ENCODE measurements at regions of chr1 and their contacts with region 1.

Region 1: DNA sequence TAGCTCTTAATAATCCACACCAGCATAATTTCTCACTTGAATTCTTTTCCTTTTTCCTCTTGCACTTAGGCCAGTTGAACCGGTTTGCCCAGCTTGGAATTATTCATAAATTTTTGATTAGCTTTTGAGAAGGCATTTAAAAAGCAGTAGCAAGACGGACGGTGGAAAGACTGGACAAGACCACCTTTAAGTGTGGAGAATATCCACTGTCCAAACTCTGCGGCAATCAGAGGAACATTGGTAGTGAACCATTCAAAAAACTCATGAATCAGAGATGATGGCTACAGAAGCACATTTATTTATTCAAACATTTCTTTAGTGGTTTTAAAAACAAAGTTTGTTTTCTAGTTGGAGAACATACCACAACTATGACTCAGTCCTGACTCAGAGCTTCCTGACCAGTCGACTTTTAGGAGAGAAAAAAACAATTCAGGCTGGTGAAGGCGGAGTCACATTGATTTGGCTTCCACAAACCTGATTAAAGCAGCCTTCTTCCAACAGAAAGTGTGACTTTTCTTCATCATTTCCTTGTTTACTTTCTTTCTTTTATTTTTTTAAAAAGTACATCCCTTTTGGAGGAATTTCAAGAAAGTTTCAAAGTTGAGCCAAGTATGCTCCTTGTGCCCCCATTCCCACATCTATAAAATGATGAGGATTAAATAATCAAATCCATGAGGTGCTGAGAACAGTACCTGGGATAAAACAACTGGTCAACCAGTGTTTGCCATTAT is 128.8 kb downstream of the ADSS2 start:
- DNase-seq: peak; percentile 99
- H3K4me3 Mint-ChIP-seq: peak overlapping the region; percentile 51
- H3K27ac Mint-ChIP-seq: peak overlapping the region; percentile 97
- H3K4me1 Mint-ChIP-seq: peaks cover 50% of the 10 kb centered on the region
- H3K27me3 Mint-ChIP-seq: no peaks in the 10 kb centered on the region
- CTCF ChIP-seq: no peak

Region 2: GRCh38 chr1:244341455-244342450 is 18.8 kb after region 1 on chr1:
- CTCF ChIA-PET with region 1: interaction called, 6 read pairs
- POLR2A ChIA-PET with region 1: interaction called, 10 read pairs
- intact Hi-C with region 1: no loop called
- DNase-seq: peak; percentile 94
- H3K4me3 Mint-ChIP-seq: peak overlapping the region; percentile 12
- H3K27ac Mint-ChIP-seq: peak overlapping the region; percentile 76
- H3K4me1 Mint-ChIP-seq: peaks cover 9% of the 10 kb centered on the region
- H3K27me3 Mint-ChIP-seq: no peaks in the 10 kb centered on the region
- CTCF ChIP-seq: no peak

Region 3: DNA sequence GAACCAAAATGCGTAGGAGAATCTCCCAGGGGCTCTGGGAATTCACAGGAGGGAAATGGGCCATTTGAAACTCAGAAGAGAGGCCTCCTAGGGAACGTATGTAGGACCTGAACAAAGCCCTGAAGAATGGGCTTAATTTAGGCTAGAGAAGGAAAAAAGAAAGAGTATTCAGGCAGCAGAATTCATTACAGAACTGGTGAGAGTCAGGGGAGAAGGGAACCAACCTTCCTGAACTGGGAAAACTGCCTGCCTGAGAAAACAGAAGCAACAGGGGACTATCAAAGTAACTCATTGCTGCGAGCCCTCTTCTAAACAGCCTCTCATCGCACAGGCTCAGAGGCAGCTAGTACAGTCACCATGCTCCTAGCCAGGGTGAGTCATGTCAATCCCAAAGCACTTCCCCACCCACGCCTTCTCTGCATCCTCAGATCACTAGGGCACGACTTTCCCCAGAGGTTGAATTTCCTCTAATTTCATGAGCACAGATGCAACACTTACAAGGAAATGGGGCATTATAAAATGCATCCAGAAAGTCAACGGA is 30.7 kb after region 1 on chr1:
- CTCF ChIA-PET with region 1: interaction called, 4 read pairs
- POLR2A ChIA-PET with region 1: interaction called, 22 read pairs
- intact Hi-C with region 1: no loop called
- DNase-seq: peak; percentile 99
- H3K4me3 Mint-ChIP-seq: no peak overlapping the region
- H3K27ac Mint-ChIP-seq: peak overlapping the region; percentile 97
- H3K4me1 Mint-ChIP-seq: peaks cover 43% of the 10 kb centered on the region
- H3K27me3 Mint-ChIP-seq: no peaks in the 10 kb centered on the region
- CTCF ChIP-seq: no peak

Region 4: GRCh38 chr1:244371242-244372141 is 48.5 kb after region 1 on chr1:
- CTCF ChIA-PET with region 1: interaction called, 3 read pairs
- POLR2A ChIA-PET with region 1: interaction called, 67 read pairs
- intact Hi-C with region 1: no loop called
- DNase-seq: peak; percentile 77
- H3K4me3 Mint-ChIP-seq: no peak overlapping the region
- H3K27ac Mint-ChIP-seq: peak overlapping the region; percentile 9
- H3K4me1 Mint-ChIP-seq: peaks cover 29% of the 10 kb centered on the region
- H3K27me3 Mint-ChIP-seq: no peaks in the 10 kb centered on the region
- CTCF ChIP-seq: no peak

Region 5: DNA sequence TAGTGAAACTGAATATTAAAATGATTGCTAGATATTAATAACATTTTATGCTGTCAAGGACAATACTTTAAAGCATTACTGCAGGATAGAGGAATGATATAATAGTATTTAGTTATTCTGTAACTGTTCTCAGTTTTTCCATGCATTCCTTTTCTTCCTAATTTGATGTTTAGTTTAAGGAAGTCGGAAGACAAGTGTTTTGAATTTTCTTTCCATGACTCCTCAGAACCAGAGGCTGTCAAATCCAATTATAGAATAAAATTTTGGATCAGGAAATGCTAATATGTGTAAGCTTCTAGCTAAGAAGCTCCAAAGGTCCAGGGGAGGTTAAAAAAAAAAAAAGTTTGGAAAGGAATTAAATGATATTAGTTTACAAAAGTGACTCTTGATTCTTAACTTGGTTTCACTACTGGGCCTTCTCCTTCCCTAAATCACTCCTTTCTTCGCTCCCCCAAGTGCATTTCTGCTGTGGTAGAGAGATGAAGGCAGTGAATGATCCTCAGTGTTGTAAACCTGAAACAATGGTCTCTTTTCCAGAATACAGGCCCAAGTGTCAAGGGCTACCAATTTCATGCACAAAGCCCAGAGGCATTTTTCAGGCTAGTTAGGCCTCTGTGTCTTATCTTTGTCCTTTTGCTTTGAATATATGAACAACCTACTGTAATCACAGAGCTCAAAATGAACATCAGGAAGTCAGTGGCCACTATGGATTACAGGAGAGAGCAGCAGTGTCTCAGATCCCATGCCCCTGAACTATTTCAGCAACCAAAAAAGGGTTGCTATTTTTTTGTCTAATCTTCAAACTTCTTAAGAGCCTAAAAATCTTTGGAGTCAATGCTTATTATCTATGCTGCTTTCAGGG is 122.6 kb after region 1 on chr1:
- CTCF ChIA-PET with region 1: interaction called, 5 read pairs
- POLR2A ChIA-PET with region 1: interaction called, 19 read pairs
- intact Hi-C with region 1: no loop called
- DNase-seq: no peak
- H3K4me3 Mint-ChIP-seq: peak overlapping the region; percentile 26
- H3K27ac Mint-ChIP-seq: peak overlapping the region; percentile 47
- H3K4me1 Mint-ChIP-seq: peaks cover 65% of the 10 kb centered on the region
- H3K27me3 Mint-ChIP-seq: no peaks in the 10 kb centered on the region
- CTCF ChIP-seq: no peak

Measured in MCF 10A (cell line).